ENCODE measurements at regions of chr19 and their contacts with region 1.

Region 1: GRCh38 chr19:14571695-14572490 is at the start of gene NDUFB7:
- DNase-seq: peak; percentile 94 to 95
- ATAC-seq: peak; percentile 97
- H3K4me3 ChIP-seq: peak within 1 kb of the TSS; percentile 64 to 88
- H3K27ac ChIP-seq: peak within 1 kb of the TSS in 1 of 2 donors; percentile 13
- H3K4me1 ChIP-seq: peaks cover 0 to 3% of the 10 kb centered on the region in 2 donors
- H3K27me3 ChIP-seq: no peaks in the 10 kb centered on the region
- total RNA-seq, gene NDUFB7: 118 to 126 TPM

Region 2: DNA sequence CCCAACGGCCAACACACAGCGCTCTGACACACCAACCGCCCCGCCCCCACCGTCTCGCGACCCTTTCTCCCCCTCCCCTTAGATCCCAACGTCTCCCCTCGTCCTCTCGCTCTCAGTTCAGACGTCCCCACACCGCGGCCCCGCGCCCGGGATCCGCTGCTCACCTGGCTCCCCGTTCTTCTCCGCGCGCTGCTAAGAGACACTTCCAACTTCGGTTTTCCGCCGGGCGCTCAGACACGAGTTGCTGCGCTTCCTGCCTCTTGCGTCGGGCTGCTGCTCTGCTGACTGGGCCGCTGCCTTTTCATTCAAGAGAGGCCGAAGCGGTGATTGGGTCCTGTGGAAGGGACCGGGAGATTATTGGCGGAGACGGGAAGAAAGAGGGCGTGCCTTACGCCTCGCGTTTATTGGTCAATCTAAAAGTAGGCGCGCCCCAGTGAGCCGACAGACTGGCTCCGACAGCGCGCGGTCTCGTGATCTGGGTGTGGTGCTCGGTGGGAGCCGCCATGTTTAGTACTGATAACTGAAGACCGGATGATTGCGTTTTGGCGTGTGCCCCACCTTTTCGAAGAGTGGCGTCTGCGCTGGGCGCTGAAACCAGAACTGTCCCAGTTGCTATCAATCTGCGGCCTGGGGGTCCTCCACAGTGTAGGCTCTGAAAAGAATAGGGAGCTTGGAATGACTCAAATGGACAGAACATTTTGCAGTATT is 152.6 kb before region 1 on chr19 and contains the start of gene DDX39A:
- intact Hi-C with region 1: no loop called
- DNase-seq: peak; percentile 98 to 99
- ATAC-seq: peak; percentile 98
- H3K4me3 ChIP-seq: peak within 1 kb of the TSS; percentile 89 to 96
- H3K27ac ChIP-seq: peak within 1 kb of the TSS; percentile 61 to 64
- H3K4me1 ChIP-seq: no peaks in the 10 kb centered on the region
- H3K27me3 ChIP-seq: no peaks in the 10 kb centered on the region
- total RNA-seq, gene DDX39A: 45.0 to 49.5 TPM

Region 3: DNA sequence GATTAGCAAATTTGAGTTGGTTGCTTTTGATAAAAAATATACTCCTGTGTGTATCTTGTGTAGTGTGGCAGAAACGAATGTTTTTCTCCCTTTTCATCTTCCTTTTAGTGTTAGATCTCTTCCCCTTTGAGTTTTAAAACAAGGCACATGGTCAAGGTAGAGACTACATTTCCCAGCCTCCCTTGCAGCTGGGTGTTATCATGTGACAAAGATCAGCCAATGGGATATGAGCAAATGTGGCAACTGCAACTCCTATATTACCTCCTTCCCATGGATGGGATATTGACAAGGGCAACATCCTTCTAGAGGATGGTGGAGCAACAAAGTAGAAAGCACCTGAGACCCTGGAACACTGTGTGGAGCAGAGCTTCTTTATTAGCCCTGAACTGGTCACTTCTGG is 60.4 kb after region 1 on chr19:
- intact Hi-C with region 1: no loop called
- DNase-seq: no peak
- ATAC-seq: no peak
- H3K4me3 ChIP-seq: no peak overlapping the region
- H3K27ac ChIP-seq: no peak overlapping the region
- H3K4me1 ChIP-seq: no peaks in the 10 kb centered on the region
- H3K27me3 ChIP-seq: no peaks in the 10 kb centered on the region

Region 4: DNA sequence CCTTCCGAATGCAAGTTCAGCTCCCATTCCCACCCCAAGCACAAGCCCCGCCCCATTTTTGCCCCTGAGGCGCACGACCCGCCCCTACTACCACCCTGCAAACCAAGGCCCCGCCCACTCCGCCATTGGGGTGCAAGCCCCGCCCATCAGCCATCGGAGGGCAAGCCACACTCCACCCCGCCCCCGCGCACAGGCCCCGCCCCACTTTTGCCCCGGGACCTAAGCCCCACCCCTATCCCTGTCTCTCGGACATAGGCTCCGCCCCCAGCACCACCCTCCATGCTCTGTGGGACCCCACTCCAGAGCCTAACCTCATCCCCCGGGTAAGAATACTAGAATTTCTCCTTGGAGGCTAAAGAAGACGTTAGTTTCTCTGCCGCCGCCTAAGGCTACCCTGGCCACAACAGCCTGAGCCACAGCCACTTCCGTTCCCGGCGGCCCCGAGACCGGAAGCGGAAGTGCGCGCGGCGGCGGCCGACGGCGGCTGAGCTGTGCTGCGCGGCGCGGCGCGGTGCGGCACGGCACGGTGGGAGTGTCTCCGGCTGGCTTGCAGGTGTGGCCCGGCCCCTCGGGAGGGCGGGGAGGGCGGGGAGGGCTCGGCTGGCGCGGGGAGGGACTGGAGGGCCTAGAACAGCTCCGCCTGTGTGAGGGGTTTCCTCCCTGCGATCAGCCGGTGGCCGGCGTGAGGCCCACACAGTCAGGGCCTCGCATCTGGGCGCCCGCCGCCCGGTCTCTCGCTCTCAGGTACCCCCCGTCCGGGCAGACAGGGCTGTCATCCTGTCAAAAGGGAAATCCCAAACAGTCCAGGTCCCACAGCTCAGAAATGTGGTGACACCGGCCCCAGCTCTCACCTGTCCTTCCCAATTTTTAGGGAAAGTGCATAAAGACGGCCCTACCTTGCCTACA is 118.0 kb after region 1 on chr19 and contains the start of gene ZNF333:
- intact Hi-C with region 1: loop called in 1 of 2 experiments (anchors 2 kb)
- DNase-seq: peak; percentile 98 to 100
- ATAC-seq: peak; percentile 98
- H3K4me3 ChIP-seq: peak within 1 kb of the TSS; percentile 95 to 100
- H3K27ac ChIP-seq: peak within 1 kb of the TSS in 1 of 2 donors; percentile 97
- H3K4me1 ChIP-seq: no peaks in the 10 kb centered on the region
- H3K27me3 ChIP-seq: no peaks in the 10 kb centered on the region
- total RNA-seq, gene ZNF333: 31.8 to 33.6 TPM

Region 5: GRCh38 chr19:14889994-14890642 is 318.2 kb after region 1 on chr19:
- intact Hi-C with region 1: loop called in 1 of 2 experiments (anchors 5 kb)
- DNase-seq: no peak
- ATAC-seq: no peak
- H3K4me3 ChIP-seq: no peak overlapping the region
- H3K27ac ChIP-seq: no peak overlapping the region
- H3K4me1 ChIP-seq: no peaks in the 10 kb centered on the region
- H3K27me3 ChIP-seq: no peaks in the 10 kb centered on the region